ENCODE measurements at regions of chr2 and their contacts with region 1.

Region 1: DNA sequence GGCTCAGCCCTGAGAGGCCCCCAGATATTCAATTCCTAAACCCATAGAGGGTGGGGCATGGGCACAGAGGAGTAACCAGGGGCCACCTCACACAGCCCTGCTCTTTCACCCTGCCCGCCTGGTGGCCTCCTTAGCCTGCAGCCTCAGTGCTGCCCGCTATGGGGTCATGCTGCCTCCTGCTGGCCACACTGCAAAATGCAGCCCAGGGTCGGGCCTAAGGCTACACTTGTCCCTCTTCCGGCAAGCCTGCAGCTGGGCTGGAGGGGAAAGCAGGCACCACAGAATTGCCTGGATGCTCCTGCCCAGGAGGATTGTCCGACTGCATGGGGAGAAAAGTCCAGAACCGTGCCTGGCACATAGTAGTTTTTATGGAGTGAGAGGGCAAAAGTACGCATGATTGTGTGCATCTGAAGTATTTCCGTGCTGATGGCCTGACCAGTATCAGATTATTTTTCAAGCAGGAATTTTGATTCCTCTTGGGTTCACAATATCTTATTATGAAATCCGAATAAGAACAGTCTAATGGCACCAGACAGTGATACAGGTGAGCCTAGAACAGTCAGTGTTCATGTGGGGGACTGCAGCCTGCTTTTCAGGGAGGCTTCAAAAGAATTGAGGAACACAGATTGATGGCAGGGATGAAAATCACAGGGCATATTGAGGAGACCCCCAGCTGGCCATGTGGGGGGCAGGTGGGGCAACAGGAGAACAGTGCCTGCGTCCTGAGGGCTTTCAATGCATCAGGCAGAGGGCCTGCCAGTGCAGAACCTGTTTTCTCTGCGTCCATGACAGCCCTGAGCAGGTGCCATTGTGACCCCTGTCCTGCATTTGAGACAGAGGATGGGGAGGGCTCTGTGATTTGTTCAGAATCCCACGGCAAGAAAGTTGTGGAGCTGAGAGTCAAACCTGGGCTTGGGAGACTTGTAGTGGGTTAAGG is 51.2 kb upstream of the ALPP start:
- DNase-seq: peak; percentile 87
- H3K4me3 Mint-ChIP-seq: no peak overlapping the region
- H3K27ac Mint-ChIP-seq: no peak overlapping the region
- H3K4me1 Mint-ChIP-seq: peaks cover 4% of the 10 kb centered on the region
- H3K27me3 Mint-ChIP-seq: no peaks in the 10 kb centered on the region

Region 2: GRCh38 chr2:231900486-231900942 is 426.9 kb before region 1 on chr2:
- CTCF ChIA-PET with region 1: interaction called, 12 read pairs
- POLR2A ChIA-PET with region 1: no interaction called
- DNase-seq: peak; percentile 61
- H3K4me3 Mint-ChIP-seq: no peak overlapping the region
- H3K27ac Mint-ChIP-seq: no peak overlapping the region
- H3K4me1 Mint-ChIP-seq: no peaks in the 10 kb centered on the region
- H3K27me3 Mint-ChIP-seq: peaks cover 6% of the 10 kb centered on the region

Region 3: DNA sequence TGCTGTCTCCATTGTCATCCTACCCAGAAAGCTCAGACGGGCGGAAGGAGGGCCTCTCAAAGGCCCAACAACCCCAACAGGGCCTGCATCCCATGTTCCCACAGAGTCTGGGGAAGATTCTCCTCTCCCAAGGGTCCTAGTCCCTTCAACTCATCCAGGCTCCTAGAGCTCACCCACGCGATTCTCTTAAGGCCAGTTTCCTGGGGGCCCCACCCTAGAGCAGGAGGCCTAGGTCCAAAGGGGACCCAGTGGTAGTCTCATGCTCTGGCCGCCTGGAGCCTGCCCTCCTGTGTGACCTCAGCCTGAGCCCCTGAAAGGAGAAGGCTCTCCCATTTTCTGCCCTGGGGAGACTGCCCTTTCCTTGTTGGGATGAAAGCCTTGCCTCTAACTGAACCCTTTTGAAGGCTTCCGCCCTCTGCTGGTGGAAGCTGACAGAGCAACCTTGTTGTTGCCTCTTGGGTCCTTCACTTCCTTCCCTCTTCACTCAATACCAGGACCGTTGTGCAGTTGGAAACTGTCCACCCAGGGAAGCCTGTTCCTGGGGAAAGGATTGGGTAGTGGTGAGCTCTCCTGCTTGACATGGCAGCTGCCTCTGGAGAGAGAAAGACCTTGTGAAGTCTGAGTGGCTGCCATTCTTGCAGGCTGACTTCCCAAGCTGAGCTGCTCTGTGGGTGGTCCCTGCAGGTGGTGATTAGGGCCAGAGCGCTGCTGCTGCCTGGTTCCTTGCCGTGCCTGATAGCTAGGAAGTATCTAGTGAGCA is 34.8 kb before region 1 on chr2:
- CTCF ChIA-PET with region 1: interaction called, 29 read pairs
- POLR2A ChIA-PET with region 1: no interaction called
- DNase-seq: peak; percentile 76
- H3K4me3 Mint-ChIP-seq: no peak overlapping the region
- H3K27ac Mint-ChIP-seq: no peak overlapping the region
- H3K4me1 Mint-ChIP-seq: peaks cover 3% of the 10 kb centered on the region
- H3K27me3 Mint-ChIP-seq: no peaks in the 10 kb centered on the region

Region 4: DNA sequence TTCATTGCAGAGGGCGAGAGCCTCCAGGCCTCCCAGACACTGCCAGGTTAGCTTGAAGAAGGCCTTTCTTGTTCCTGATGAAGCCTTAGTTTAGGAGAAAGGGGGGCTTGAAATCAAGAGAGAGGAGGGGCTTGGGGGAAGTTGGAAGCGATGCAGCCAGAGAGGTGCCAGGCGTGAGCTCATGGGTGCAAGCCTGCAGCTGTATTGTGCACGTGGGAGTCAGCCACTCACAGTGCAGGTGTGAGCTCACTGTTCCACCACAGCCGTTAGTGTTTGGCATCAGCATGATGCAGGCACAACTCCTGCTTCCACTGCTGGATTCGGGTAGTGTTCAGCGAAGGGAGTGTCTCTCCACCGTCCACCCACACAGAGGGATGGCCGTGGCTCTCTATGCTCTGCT is 17.3 kb before region 1 on chr2:
- CTCF ChIA-PET with region 1: interaction called, 27 read pairs
- POLR2A ChIA-PET with region 1: interaction called, 3 read pairs
- DNase-seq: peak; percentile 53
- H3K4me3 Mint-ChIP-seq: no peak overlapping the region
- H3K27ac Mint-ChIP-seq: peak overlapping the region; percentile 83
- H3K4me1 Mint-ChIP-seq: peaks cover 53% of the 10 kb centered on the region
- H3K27me3 Mint-ChIP-seq: no peaks in the 10 kb centered on the region

Region 5: DNA sequence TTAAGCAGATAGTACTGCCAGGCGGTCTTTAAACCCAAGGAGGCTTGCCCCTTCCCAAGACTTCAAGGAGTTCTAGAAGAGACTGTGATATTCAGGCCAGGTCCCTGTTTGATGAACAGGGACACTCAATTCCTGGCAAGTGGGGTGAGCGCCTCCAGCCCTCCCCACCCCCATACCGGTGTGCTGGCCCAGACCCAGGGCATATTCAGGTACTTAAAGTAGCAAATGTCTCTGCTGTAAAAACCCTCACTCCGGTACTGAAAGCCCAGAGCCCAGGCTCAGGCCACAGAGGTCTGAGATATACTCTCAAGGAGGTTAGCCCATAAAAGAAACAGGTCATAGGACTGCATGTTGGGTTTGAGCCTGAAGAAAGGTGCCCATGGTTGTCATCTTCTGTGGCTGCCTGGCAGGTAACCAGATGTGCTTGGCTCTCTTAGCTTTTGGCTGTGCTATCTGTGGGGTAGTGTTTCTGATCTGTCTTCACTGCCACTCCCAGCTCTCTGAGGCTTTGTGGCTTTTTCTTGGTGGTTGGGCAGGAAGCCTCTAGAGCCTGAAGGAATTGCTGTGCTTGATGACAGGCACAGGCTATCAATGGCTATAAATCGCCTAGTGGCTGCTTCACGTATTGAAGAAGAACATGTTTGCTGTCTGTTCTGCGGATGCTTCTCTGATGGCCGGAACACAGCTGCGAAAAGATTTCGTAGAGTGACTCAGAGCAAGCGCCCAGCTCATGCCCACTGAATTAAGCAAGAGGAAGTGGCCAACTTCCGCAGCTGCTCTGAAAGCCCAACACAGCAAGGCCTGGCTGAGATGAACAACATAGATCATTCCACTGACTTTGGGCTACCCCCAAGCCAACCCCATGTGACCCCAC is 12.1 kb before region 1 on chr2:
- CTCF ChIA-PET with region 1: interaction called, 27 read pairs
- POLR2A ChIA-PET with region 1: interaction called, 3 read pairs
- DNase-seq: peak; percentile 89
- H3K4me3 Mint-ChIP-seq: peak overlapping the region; percentile 40
- H3K27ac Mint-ChIP-seq: peak overlapping the region; percentile 91
- H3K4me1 Mint-ChIP-seq: peaks cover 79% of the 10 kb centered on the region
- H3K27me3 Mint-ChIP-seq: no peaks in the 10 kb centered on the region

Region 6: DNA sequence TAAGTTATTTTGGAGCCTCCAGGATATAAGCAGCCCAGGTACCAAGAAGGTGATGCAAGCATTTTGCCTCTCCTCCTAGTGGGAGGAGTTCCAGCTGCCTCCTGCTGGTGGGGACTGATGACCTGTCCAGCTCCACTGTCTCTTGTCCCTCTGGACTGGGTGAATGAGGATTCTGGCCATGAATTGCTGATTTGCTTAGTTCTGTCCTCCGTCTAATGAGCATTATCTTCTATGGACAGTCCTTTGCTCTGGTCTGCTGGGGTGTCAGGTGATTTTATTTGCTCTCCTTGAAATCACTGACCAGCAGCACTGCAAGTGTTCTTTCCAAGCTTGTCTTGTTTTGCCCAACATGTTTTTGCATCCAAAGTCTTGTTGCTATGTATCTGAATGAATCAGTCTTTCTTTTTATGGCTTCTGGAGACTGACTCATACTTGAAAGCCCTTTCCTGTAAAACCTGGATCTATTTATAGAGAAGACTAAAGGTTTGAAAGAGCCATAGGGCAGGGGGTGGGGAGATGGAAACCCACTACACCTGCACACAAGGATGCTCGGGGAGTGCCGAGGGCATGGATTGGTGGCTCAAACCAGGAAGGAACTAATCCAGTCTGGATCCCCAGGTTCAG is 265.5 kb after region 1 on chr2:
- CTCF ChIA-PET with region 1: no interaction called
- POLR2A ChIA-PET with region 1: no interaction called
- DNase-seq: no peak
- H3K4me3 Mint-ChIP-seq: no peak overlapping the region
- H3K27ac Mint-ChIP-seq: no peak overlapping the region
- H3K4me1 Mint-ChIP-seq: peaks cover 11% of the 10 kb centered on the region
- H3K27me3 Mint-ChIP-seq: no peaks in the 10 kb centered on the region

Region 7: GRCh38 chr2:232781765-232782164 is 454.4 kb after region 1 on chr2:
- CTCF ChIA-PET with region 1: no interaction called
- POLR2A ChIA-PET with region 1: no interaction called
- DNase-seq: peak; percentile 47
- H3K4me3 Mint-ChIP-seq: no peak overlapping the region
- H3K27ac Mint-ChIP-seq: peak overlapping the region; percentile 68
- H3K4me1 Mint-ChIP-seq: peaks cover 21% of the 10 kb centered on the region
- H3K27me3 Mint-ChIP-seq: no peaks in the 10 kb centered on the region